ENCODE measurements at regions of chr17 and their contacts with region 1.

Region 1: DNA sequence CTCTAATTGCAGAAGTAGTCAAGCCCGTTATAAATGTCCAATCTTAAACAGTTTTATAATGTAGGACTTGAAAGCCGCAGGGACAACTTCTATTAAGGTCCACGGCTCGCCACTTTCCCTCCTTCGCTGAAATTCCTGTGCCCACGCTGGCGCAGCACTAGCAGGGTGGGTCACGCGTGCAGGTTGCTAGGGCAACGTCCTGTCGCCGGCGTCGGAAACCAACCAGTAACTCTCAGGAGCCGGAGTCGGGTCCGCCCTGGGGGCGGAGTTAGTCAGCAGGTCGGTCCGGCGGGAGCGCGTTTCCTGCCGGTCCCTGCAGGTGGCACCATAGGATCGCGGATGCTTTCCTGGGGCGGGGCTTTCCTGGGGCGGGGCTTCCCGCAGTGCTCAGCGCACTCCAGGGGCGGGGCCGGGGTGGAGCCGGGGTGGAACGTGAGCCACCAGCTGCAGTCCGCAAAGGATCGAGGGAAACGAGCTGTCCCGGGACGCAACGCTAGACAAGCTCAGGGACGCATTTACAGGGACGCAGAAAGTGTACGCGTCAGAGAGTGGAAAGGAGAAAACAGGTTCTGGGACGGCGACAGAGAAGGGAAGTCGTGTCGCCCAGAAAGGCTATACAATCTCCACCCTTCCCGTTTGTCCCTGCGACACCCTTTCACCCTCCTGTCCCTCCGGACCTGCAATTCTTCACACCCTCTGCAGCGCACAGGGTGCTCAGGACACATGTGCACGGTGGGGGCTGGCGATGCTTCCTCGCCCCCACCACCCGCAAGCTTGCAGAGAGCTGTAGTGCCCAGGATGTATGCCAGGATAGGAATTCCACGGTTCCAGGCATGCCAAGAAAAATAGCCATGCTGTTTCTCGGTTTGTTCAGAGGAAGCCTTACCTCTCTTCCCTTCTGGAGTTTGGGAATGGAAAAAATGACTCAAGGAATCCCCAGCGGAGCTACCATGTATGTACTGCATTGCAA is 12.4 kb downstream of the COPZ2 start:
- H3K4me3 ChIP-seq: peak overlapping the region; percentile 45
- H3K27ac ChIP-seq: no peak overlapping the region
- H3K4me1 ChIP-seq: peaks cover 14% of the 10 kb centered on the region
- CTCF ChIP-seq: peak; percentile 86

Region 2: DNA sequence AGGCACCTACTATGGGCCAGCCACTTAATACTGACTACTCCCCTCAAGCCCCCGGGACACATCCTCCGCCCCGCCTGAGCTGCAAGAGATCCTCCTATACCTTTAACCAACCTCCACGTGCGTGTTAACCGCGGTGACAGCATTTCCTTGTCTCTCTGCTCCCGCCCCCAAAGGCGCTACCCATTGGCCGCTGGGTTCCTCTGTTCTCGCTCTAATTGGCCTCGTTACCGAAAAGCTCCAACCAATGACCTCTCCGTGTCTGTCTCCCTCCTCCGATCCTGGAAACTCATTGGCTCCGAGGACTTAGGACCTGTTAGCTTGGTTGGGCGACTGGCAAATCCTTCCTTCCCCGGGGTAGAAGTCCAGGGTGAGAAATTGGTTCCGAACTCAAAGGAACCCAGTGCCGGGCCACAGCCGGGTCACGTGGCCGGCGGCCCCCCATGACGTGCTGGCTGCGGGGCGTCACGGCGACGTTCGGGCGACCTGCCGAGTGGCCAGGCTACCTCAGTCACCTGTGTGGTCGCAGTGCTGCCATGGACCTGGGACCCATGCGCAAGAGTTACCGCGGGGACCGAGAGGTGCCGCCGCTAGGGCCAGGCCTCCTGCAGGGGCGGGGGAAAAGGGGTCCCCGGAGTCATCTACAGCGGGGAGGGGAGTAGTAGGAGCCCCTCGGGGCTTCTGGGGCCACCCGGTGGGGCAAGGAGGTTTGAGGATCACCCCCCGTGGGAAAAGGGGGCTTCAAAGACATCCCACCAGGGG is 83.8 kb before region 1 on chr17 and contains the start of gene PNPO:
- CTCF ChIA-PET with region 1: interaction called, 359 read pairs
- POLR2A ChIA-PET with region 1: interaction called, 3 read pairs
- H3K4me3 ChIP-seq: peak within 1 kb of the TSS; percentile 79
- H3K27ac ChIP-seq: peak within 1 kb of the TSS; percentile 61; the same call in 1 of the 2 replicates
- H3K4me1 ChIP-seq: no peaks in the 10 kb centered on the region
- CTCF ChIP-seq: peak; percentile 64; the same call in 1 of the 2 replicates

Region 3: GRCh38 chr17:47978324-47978723 is 46.9 kb before region 1 on chr17:
- CTCF ChIA-PET with region 1: interaction called, 386 read pairs
- POLR2A ChIA-PET with region 1: no interaction called
- H3K4me3 ChIP-seq: no peak overlapping the region
- H3K27ac ChIP-seq: no peak overlapping the region
- H3K4me1 ChIP-seq: no peaks in the 10 kb centered on the region
- CTCF ChIP-seq: peak; percentile 73

Region 4: GRCh38 chr17:48047741-48048383 is 22.6 kb after region 1 on chr17 and contains the start of gene NFE2L1:
- CTCF ChIA-PET with region 1: interaction called, 30 read pairs
- POLR2A ChIA-PET with region 1: interaction called, 26 read pairs
- H3K4me3 ChIP-seq: peak within 1 kb of the TSS; percentile 83
- H3K27ac ChIP-seq: peak within 1 kb of the TSS; percentile 97
- H3K4me1 ChIP-seq: peaks cover 36% of the 10 kb centered on the region
- CTCF ChIP-seq: peak; percentile 30; the same call in 1 of the 2 replicates

Region 5: GRCh38 chr17:48074315-48075081 is 49.3 kb after region 1 on chr17:
- CTCF ChIA-PET with region 1: interaction called, 197 read pairs
- POLR2A ChIA-PET with region 1: interaction called, 4 read pairs
- H3K4me3 ChIP-seq: no peak overlapping the region
- H3K27ac ChIP-seq: peak overlapping the region; percentile 44; the same call in 1 of the 2 replicates
- H3K4me1 ChIP-seq: no peaks in the 10 kb centered on the region
- CTCF ChIP-seq: peak; percentile 23; the same call in 1 of the 2 replicates

Region 6: DNA sequence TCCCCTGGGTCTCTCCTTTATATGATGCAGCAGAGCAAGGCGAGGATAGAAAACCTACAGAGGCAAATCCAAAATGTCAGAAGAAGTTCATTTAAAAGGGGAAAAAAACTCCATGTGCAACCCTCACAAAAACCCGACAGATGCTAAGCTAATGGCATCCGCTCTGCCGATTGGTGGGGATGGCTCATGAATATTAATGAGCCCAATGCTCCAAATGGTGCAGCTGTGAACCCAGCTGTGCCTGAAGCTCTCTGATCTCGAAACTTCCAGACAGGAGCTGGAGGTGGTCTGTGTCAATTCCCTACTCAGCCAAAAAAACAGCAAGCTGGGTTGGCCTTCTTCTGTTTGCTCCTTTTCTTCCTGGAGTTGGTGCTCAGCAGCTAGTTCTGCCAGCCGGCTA is 97.9 kb after region 1 on chr17:
- CTCF ChIA-PET with region 1: interaction called, 16 read pairs
- POLR2A ChIA-PET with region 1: no interaction called
- H3K4me3 ChIP-seq: no peak overlapping the region
- H3K27ac ChIP-seq: no peak overlapping the region
- H3K4me1 ChIP-seq: no peaks in the 10 kb centered on the region
- CTCF ChIP-seq: no peak

Region 7: GRCh38 chr17:48393283-48393682 is 368.1 kb after region 1 on chr17:
- CTCF ChIA-PET with region 1: no interaction called
- POLR2A ChIA-PET with region 1: no interaction called
- H3K4me3 ChIP-seq: no peak overlapping the region
- H3K27ac ChIP-seq: no peak overlapping the region
- H3K4me1 ChIP-seq: peaks cover 22% of the 10 kb centered on the region
- CTCF ChIP-seq: no peak

Region 8: DNA sequence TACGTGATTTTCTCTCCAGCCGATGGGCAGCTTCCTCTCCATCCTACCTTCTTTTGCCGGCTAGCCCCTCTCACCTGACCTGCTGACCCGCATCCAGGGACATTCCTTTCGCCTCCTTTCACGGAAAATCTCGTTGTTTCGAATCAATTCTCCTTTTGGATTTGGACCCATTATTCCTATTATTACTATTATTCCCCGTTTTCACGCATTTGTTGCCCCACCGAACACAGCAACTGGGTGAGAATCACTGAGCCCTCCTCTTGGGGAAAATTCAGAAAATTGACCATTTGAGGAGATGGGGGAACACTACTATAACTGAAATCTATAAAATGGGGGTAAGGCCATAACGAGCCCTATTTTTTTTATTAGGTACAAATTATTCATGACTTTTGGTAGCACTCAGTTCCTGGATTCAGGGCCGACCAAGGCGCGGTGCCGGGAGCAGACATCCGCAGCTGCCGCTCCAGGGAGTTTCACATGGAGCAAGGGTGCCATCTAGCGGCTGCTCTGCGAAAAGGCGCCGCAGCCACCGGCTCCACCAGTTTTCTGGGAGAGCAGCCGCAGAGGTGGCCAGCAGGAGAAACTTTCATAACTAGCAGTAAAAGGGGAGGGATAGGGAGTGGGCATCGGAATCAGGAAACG is 593.2 kb after region 1 on chr17:
- CTCF ChIA-PET with region 1: interaction called, 13 read pairs
- POLR2A ChIA-PET with region 1: no interaction called
- H3K4me3 ChIP-seq: no peak overlapping the region
- H3K27ac ChIP-seq: peak overlapping the region; percentile 44; the same call in 1 of the 2 replicates
- H3K4me1 ChIP-seq: peaks cover 48% of the 10 kb centered on the region
- CTCF ChIP-seq: peak; percentile 96

Measured in HEK293 (cell line).